BJ (cell line): ENCODE measurements at regions of chr5 and their contacts with region 1.

Region 1: GRCh38 chr5:79857714-79858409 is 133.2 kb downstream of the MTX3 start:
- DNase-seq: no peak
- H3K4me3 ChIP-seq: no peak overlapping the region
- H3K27me3 ChIP-seq: 0 out of 2 replicates have a peak, but pooled peaks cover 1% of the 10 kb centered on the region
- CTCF ChIP-seq: peak; percentile 94

Region 2: DNA sequence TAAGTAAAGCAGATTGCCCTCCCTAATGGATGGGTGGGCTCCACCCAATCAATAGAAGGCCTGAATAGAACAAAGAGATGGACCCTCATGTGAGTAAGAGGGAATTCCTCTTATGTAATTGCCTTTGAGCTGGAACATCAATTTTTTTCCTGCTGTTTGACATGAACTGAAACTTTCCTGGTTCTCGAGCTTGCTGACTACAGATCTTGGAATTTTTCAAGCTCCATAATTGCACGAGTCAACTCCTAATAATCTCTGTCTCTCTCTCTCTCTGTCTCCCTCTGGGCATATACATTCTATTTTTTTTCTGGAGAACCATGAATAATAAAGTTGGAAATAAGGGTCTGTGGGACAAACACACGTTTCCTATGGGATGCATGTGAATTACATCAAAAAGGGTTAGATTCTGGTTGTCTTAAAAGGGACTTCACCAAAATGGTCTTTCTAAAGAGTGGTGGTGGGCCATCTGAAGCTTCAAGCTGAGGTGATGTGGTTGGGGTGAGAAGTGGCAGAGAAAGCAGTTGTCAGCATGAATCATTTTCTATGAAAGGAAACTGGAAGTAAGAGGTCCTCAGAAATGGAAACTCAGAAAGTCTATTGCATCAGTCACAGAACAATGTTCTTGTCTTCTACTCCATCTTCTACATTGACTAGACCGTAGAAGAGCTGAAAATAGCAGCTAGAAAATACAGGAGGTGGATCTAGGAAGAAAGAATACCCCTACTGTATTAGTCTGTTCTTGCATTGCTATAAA is 296.9 kb before region 1 on chr5:
- CTCF ChIA-PET with region 1: interaction called, 24 read pairs
- POLR2A ChIA-PET with region 1: no interaction called
- DNase-seq: no peak
- H3K4me3 ChIP-seq: no peak overlapping the region
- H3K27me3 ChIP-seq: no peaks in the 10 kb centered on the region
- CTCF ChIP-seq: no peak

Region 3: DNA sequence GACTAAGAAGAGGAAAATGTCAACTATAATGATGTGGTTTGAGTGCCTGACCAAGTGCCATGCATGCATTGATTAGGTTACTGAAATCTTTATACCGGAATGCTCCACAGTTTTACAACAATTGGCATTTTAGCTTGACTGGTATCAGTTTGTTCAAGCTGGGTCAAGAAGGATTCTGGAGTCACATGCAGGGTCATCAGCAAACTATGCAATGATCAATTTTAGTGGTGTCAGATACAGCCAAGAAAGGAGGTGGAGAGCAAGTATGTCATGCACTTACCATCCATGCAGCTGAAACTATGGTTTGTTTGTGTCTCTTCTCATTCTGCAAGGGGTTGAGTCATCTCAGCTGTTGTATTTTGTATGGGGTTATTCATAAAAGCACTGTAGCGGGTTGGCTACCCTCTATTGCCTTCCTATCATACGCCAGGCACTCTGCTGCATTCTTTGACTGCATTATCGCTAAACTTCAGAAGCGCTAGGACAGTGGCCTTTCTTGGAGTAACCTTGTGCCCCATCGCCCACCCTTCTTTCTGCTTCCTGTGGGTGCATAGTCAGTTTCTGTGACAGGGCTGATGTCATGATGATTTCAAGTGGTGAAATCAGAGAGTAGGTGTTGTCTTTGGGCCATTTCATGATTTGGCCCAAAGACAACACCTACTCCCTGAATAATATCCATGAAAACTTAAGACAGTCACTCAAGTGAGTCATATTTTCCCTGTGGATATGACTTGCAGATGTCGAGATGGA is 12.2 kb before region 1 on chr5:
- CTCF ChIA-PET with region 1: interaction called, 11 read pairs
- POLR2A ChIA-PET with region 1: no interaction called
- DNase-seq: peak; percentile 78
- H3K4me3 ChIP-seq: no peak overlapping the region
- H3K27me3 ChIP-seq: no peaks in the 10 kb centered on the region
- CTCF ChIP-seq: no peak